Psoas muscle (tissue), 8 donors: ENCODE measurements at regions of chr13 and their contacts with region 1.

Region 1: GRCh38 chr13:71998223-71998622 is 131.2 kb upstream of the DACH1 start:
- DNase-seq: no peak
- ATAC-seq: no peak
- H3K4me3 ChIP-seq: no peak overlapping the region
- H3K27ac ChIP-seq: no peak overlapping the region
- H3K4me1 ChIP-seq: no peaks in the 10 kb centered on the region
- H3K27me3 ChIP-seq: no peaks in the 10 kb centered on the region
- CTCF ChIP-seq: no peak

Region 2: GRCh38 chr13:71935166-71935840 is 62.9 kb before region 1 on chr13:
- intact Hi-C with region 1: loop called in 1 of 2 experiments (anchors 2 kb)
- DNase-seq: no peak
- ATAC-seq: no peak
- H3K4me3 ChIP-seq: no peak overlapping the region
- H3K27ac ChIP-seq: no peak overlapping the region
- H3K4me1 ChIP-seq: no peaks in the 10 kb centered on the region
- H3K27me3 ChIP-seq: no peaks in the 10 kb centered on the region
- CTCF ChIP-seq: no peak